Caco-2 (cell line): ENCODE measurements at regions of chr14 and their contacts with region 1.

Region 1: GRCh38 chr14:32576088-32576795 is 247.1 kb downstream of the AKAP6 start:
- DNase-seq: peak in 1 of 2 experiments; percentile 53
- H3K4me3 ChIP-seq: no peak overlapping the region
- H3K4me3 Mint-ChIP-seq: no peak overlapping the region
- H3K27ac Mint-ChIP-seq: no peak overlapping the region
- H3K4me1 ChIP-seq: peaks cover 12% of the 10 kb centered on the region; the same call in 1 of the 2 replicates
- H3K4me1 Mint-ChIP-seq: no peaks in the 10 kb centered on the region
- H3K27me3 ChIP-seq: no peaks in the 10 kb centered on the region
- H3K27me3 Mint-ChIP-seq: peaks cover 11% of the 10 kb centered on the region
- CTCF ChIP-seq: peak; percentile 91 to 94

Region 2: DNA sequence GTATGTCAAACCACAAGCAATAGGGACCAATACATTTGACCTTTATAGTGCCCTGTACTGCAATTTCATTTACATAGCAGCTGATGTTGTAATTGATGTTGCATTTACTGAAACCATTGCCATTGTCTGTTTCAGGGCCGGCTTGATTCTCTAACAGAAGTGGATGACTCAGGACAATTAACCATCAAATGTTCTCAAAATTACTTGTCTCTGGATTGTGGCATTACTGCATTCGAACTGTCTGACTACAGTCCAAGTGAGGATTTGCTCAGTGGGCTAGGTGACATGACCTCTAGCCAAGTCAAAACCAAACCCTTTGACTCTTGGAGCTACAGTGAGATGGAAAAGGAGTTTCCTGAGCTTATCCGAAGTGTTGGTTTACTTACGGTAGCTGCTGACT is 31.1 kb before region 1 on chr14:
- CTCF ChIA-PET with region 1: no interaction called
- POLR2A ChIA-PET with region 1: no interaction called
- intact Hi-C with region 1: no loop called
- DNase-seq: no peak
- H3K4me3 ChIP-seq: no peak overlapping the region
- H3K4me3 Mint-ChIP-seq: no peak overlapping the region
- H3K27ac Mint-ChIP-seq: no peak overlapping the region
- H3K4me1 ChIP-seq: peaks cover 40% of the 10 kb centered on the region
- H3K4me1 Mint-ChIP-seq: peaks cover 13% of the 10 kb centered on the region
- H3K27me3 ChIP-seq: no peaks in the 10 kb centered on the region
- H3K27me3 Mint-ChIP-seq: no peaks in the 10 kb centered on the region
- CTCF ChIP-seq: no peak

Region 3: DNA sequence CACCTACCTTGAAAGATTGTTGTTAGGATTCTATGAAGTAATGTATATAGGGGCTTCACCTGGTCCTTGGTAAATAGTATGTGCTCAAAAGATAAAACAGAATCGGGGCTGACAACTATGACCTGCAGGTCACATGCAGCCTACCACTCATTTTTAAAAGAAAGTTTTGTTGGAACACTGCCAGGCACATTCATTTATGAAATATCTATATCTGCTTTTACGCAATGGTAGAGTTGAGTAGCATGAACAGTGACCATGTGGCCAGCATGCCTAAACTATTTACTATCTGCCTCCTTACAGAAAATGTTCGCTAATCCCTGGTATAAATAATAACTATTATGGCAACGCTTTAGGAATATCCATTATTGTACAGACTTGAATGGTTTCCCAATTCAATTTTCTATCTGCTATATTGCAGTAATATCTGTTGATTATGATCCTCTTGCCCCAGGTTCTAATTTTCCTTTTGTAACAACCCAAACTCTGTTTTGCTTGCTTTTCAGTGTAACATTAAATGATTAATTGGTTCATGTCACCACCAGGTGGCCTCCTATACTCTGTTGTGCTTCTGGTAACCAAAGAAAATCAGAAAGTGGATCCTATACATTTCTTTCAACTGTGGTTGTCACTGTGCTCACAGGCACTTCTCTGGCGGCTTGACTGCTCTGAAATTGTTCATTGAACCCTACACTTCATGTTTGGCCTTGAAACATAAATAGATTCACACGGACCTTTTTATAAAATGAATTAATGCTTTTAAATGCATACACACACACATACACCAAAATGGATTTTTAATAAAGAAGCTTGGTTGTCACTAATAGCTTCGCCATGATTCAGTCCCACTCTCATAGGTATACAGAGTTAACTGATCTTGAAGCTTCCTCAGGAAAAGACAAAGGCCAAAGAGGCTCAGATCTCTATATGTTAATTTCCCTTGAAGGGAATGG is 134.8 kb after region 1 on chr14:
- CTCF ChIA-PET with region 1: no interaction called
- POLR2A ChIA-PET with region 1: no interaction called
- intact Hi-C with region 1: loop called (anchors 1 kb)
- DNase-seq: peak in 1 of 2 experiments; percentile 41
- H3K4me3 ChIP-seq: no peak overlapping the region
- H3K4me3 Mint-ChIP-seq: no peak overlapping the region
- H3K27ac Mint-ChIP-seq: no peak overlapping the region
- H3K4me1 ChIP-seq: no peaks in the 10 kb centered on the region
- H3K4me1 Mint-ChIP-seq: no peaks in the 10 kb centered on the region
- H3K27me3 ChIP-seq: no peaks in the 10 kb centered on the region
- H3K27me3 Mint-ChIP-seq: peaks cover 16% of the 10 kb centered on the region
- CTCF ChIP-seq: peak; percentile 52 to 62

Region 4: DNA sequence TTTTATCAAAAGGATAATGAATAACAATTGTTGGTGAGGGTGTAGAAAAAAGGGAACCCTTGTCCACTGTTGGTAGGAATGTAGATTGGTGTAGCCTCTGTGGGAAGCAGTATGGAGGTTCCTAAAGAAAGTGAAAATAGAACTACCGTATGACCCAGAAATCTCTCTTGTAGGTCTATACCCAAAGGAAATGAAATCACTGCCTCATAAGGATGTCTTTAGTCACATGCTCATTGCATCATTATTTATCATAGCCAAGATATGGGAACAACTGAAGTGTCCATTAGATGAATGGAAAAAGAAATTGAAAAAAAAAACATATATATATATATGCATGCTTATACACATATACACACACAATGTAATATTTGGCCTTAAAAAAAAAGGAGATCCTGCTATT is 203.6 kb after region 1 on chr14:
- CTCF ChIA-PET with region 1: no interaction called
- POLR2A ChIA-PET with region 1: no interaction called
- intact Hi-C with region 1: no loop called
- DNase-seq: no peak
- H3K4me3 ChIP-seq: no peak overlapping the region
- H3K4me3 Mint-ChIP-seq: no peak overlapping the region
- H3K27ac Mint-ChIP-seq: no peak overlapping the region
- H3K4me1 ChIP-seq: no peaks in the 10 kb centered on the region
- H3K4me1 Mint-ChIP-seq: no peaks in the 10 kb centered on the region
- H3K27me3 ChIP-seq: no peaks in the 10 kb centered on the region
- H3K27me3 Mint-ChIP-seq: no peaks in the 10 kb centered on the region
- CTCF ChIP-seq: no peak

Region 5: DNA sequence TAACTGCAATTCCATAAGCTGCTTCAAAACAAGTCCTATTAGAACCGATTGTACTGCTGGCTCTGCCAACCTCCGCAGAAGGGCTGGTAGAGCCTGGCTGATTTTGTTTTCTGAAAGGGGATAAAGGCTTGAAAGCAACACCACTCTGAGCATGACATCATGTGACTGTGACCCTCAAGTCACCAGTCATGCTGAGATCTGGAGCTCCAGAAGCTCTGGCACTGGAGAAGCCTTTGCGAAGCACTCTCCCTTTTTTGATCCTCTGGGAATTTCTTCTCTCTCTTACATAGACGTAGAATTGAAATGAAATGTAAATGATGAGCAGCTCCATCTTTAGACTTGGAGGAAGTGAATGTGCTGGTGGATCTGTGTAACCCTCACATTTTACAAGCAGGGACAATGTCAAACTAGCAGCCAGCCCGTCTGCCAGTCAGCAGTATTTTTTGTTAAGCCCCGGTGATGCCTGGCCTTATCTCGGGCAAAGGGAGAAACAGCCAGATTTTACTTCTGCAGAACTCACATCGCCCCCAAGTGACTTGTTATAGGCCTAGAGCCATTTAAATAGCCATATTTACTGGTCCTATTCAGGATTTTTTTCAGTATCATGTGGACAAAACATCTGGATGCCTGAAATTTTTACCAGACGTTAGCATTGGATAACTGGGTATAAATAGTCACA is 250.3 kb after region 1 on chr14:
- CTCF ChIA-PET with region 1: no interaction called
- POLR2A ChIA-PET with region 1: no interaction called
- intact Hi-C with region 1: loop called (anchors 5 kb)
- DNase-seq: no peak
- H3K4me3 ChIP-seq: no peak overlapping the region
- H3K4me3 Mint-ChIP-seq: no peak overlapping the region
- H3K27ac Mint-ChIP-seq: no peak overlapping the region
- H3K4me1 ChIP-seq: no peaks in the 10 kb centered on the region
- H3K4me1 Mint-ChIP-seq: no peaks in the 10 kb centered on the region
- H3K27me3 ChIP-seq: no peaks in the 10 kb centered on the region
- H3K27me3 Mint-ChIP-seq: peaks cover 3% of the 10 kb centered on the region
- CTCF ChIP-seq: no peak

Region 6: GRCh38 chr14:32865886-32866285 is 289.6 kb after region 1 on chr14:
- CTCF ChIA-PET with region 1: no interaction called
- POLR2A ChIA-PET with region 1: no interaction called
- intact Hi-C with region 1: no loop called
- DNase-seq: no peak
- H3K4me3 ChIP-seq: no peak overlapping the region
- H3K4me3 Mint-ChIP-seq: no peak overlapping the region
- H3K27ac Mint-ChIP-seq: no peak overlapping the region
- H3K4me1 ChIP-seq: no peaks in the 10 kb centered on the region
- H3K4me1 Mint-ChIP-seq: no peaks in the 10 kb centered on the region
- H3K27me3 ChIP-seq: no peaks in the 10 kb centered on the region
- H3K27me3 Mint-ChIP-seq: peaks cover 7% of the 10 kb centered on the region
- CTCF ChIP-seq: no peak

Region 7: GRCh38 chr14:32998433-32998832 is 422.2 kb after region 1 on chr14:
- CTCF ChIA-PET with region 1: no interaction called
- POLR2A ChIA-PET with region 1: no interaction called
- intact Hi-C with region 1: loop called (anchors 1 kb)
- DNase-seq: no peak
- H3K4me3 ChIP-seq: no peak overlapping the region
- H3K4me3 Mint-ChIP-seq: no peak overlapping the region
- H3K27ac Mint-ChIP-seq: no peak overlapping the region
- H3K4me1 ChIP-seq: no peaks in the 10 kb centered on the region
- H3K4me1 Mint-ChIP-seq: no peaks in the 10 kb centered on the region
- H3K27me3 ChIP-seq: no peaks in the 10 kb centered on the region
- H3K27me3 Mint-ChIP-seq: no peaks in the 10 kb centered on the region
- CTCF ChIP-seq: peak; percentile 6 to 8

Region 8: GRCh38 chr14:33432407-33433023 is 856.3 kb after region 1 on chr14:
- CTCF ChIA-PET with region 1: no interaction called
- POLR2A ChIA-PET with region 1: no interaction called
- intact Hi-C with region 1: loop called (anchors 1 kb)
- DNase-seq: peak in 1 of 2 experiments; percentile 10
- H3K4me3 ChIP-seq: no peak overlapping the region
- H3K4me3 Mint-ChIP-seq: no peak overlapping the region
- H3K27ac Mint-ChIP-seq: no peak overlapping the region
- H3K4me1 ChIP-seq: no peaks in the 10 kb centered on the region
- H3K4me1 Mint-ChIP-seq: no peaks in the 10 kb centered on the region
- H3K27me3 ChIP-seq: no peaks in the 10 kb centered on the region
- H3K27me3 Mint-ChIP-seq: peaks cover 5% of the 10 kb centered on the region
- CTCF ChIP-seq: peak; percentile 28 to 39

Region 9: GRCh38 chr14:33792720-33793368 is 1216.6 kb after region 1 on chr14:
- CTCF ChIA-PET with region 1: no interaction called
- POLR2A ChIA-PET with region 1: no interaction called
- intact Hi-C with region 1: loop called (anchors 1 kb)
- DNase-seq: peak; percentile 64 to 81
- H3K4me3 ChIP-seq: no peak overlapping the region
- H3K4me3 Mint-ChIP-seq: no peak overlapping the region
- H3K27ac Mint-ChIP-seq: no peak overlapping the region
- H3K4me1 ChIP-seq: peaks cover 5% of the 10 kb centered on the region; the same call in 1 of the 2 replicates
- H3K4me1 Mint-ChIP-seq: no peaks in the 10 kb centered on the region
- H3K27me3 ChIP-seq: 0 out of 2 replicates have a peak, but pooled peaks cover 2% of the 10 kb centered on the region
- H3K27me3 Mint-ChIP-seq: peaks cover 9% of the 10 kb centered on the region
- CTCF ChIP-seq: peak; percentile 89 to 90

Region 10: GRCh38 chr14:34322940-34323418 is 1746.7 kb after region 1 on chr14:
- CTCF ChIA-PET with region 1: no interaction called
- POLR2A ChIA-PET with region 1: no interaction called
- intact Hi-C with region 1: loop called (anchors 10 kb)
- DNase-seq: peak; percentile 56 to 71
- H3K4me3 ChIP-seq: no peak overlapping the region
- H3K4me3 Mint-ChIP-seq: no peak overlapping the region
- H3K27ac Mint-ChIP-seq: no peak overlapping the region
- H3K4me1 ChIP-seq: no peaks in the 10 kb centered on the region
- H3K4me1 Mint-ChIP-seq: no peaks in the 10 kb centered on the region
- H3K27me3 ChIP-seq: no peaks in the 10 kb centered on the region
- H3K27me3 Mint-ChIP-seq: no peaks in the 10 kb centered on the region
- CTCF ChIP-seq: peak; percentile 69 to 71